HEK293 (cell line): ENCODE measurements at regions of chrX and their contacts with region 1.

Region 1: DNA sequence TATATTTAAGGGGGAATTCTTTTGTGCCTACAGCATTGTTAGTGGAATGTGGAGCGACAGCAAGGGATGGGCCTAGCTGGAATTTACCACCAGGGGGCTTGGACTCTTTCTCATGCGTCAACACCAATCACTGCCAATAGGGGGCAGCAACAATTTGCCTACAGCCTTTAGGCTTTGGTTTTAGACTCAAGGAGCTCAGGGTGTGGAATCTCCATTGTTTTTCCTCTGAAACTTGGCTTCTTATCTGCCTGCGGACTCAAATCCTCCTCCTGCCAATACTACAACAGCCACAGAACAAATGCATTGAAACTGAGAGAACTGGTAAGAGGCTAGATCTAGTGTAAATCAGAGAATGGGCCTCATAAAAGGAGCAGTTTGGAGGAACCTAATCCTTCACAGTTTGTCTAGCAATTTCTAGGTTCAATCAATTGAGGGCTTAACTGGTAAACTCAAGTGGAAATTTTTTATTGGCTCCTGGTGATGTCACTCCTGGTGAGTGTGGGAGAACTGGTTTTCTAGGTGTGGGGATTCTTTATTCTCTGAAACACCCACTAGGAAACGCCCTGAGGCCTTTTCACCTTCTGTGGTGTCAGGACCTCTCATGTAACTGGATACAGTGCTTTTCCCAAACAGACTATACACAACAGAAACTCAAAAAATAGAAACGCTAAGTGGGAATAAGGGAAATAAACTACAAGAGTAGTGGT is 27.9 kb upstream of the TMSB4X start:
- H3K4me3 ChIP-seq: no peak overlapping the region
- H3K27ac ChIP-seq: peak overlapping the region; percentile 90
- H3K4me1 ChIP-seq: peaks cover 17% of the 10 kb centered on the region
- CTCF ChIP-seq: peak; percentile 55; the same call in 1 of the 2 replicates

Region 2: DNA sequence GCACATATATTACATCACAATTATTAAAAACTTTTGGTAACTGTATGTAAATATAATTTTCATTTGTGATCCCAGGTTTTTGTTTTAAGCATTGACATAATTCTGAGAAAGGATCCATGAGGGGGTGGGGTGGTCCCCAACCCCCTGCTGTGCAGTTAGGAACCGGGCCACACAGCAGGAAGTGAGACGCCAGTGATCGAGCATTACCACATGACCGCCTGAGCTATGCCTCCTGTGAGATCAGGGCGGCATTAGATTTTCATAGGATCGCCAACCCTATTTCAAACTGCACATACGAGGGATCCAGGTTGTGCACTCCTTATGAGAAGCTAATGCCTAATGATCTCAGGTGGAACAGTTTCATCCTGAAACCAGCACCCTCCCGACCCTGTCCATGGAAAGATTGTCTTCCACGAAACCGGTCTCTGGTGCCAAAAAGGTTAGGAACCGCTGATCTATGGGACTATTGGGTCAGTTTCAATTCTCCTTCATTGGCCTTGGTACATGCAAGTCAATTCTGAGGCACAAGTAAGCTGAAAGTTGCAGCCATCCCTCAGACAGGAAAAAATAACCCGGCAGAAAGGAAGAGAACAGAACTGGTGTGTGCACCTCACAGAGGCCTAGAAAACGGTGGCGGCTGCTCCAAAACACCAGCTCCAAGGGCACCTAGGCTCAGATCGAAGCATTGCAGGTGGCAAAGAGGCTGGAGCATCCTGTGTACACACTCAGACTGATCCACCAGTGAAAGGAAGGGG is 20.9 kb after region 1 on chrX:
- CTCF ChIA-PET with region 1: interaction called, 27 read pairs
- POLR2A ChIA-PET with region 1: interaction called, 3 read pairs
- H3K4me3 ChIP-seq: no peak overlapping the region
- H3K27ac ChIP-seq: no peak overlapping the region
- H3K4me1 ChIP-seq: no peaks in the 10 kb centered on the region
- CTCF ChIP-seq: no peak

Region 3: GRCh38 chrX:13000301-13000811 is 53.4 kb after region 1 on chrX:
- CTCF ChIA-PET with region 1: interaction called, 13 read pairs
- POLR2A ChIA-PET with region 1: no interaction called
- H3K4me3 ChIP-seq: no peak overlapping the region
- H3K27ac ChIP-seq: no peak overlapping the region
- H3K4me1 ChIP-seq: peaks cover 7% of the 10 kb centered on the region; the same call in 1 of the 2 replicates
- CTCF ChIP-seq: no peak

Region 4: DNA sequence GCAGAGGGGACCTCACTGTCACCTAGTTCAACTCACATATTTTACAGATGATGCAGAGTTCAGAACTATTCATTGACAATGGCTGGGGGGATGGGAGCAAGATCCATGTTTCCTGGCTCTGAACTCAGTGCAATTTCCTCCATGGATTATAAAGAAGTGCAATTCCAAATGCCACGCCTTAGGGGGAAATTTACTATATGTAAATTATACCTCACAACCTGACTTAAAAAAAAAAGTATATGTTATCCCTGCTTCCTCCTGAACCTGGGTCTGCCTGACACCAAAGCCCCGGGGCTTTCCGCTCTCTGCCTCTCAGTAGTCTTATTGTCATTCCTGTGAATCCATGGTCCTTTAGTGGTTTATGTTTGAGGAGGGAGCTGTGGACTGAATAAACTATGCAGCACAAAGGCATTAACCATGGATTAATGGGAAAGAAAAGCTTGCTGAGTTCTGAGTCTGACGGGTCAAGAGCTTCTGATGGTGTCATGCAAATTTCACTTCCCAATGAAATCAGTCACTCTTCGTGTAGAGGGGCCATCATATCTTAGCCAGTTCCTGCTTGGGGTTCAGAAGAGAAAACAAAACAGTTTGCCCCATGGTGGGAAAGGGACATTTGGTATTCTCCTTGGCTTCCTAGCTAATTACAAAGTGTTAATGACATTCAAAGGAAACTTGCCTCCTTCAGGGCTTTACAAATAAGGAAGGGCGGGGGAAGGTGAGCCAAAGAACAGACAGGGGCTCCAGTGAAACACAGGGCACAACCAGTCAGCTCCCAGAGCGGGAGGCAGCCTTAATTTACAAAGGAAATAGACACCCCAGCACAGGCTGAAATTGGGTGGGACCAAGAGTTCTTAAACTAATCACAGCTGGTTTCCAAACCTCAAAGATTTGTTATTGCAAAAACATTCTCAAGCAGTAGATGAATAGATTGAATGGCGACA is 83.1 kb after region 1 on chrX:
- CTCF ChIA-PET with region 1: interaction called, 10 read pairs
- POLR2A ChIA-PET with region 1: interaction called, 7 read pairs
- H3K4me3 ChIP-seq: no peak overlapping the region
- H3K27ac ChIP-seq: peak overlapping the region; percentile 54
- H3K4me1 ChIP-seq: peaks cover 21% of the 10 kb centered on the region
- CTCF ChIP-seq: no peak

Region 5: GRCh38 chrX:13126775-13127174 is 179.8 kb after region 1 on chrX:
- CTCF ChIA-PET with region 1: interaction called, 11 read pairs
- POLR2A ChIA-PET with region 1: no interaction called
- H3K4me3 ChIP-seq: no peak overlapping the region
- H3K27ac ChIP-seq: peak overlapping the region; percentile 22; the same call in 1 of the 2 replicates
- H3K4me1 ChIP-seq: peaks cover 30% of the 10 kb centered on the region
- CTCF ChIP-seq: no peak

Region 6: GRCh38 chrX:13254076-13254785 is 307.2 kb after region 1 on chrX:
- CTCF ChIA-PET with region 1: interaction called, 17 read pairs
- POLR2A ChIA-PET with region 1: no interaction called
- H3K4me3 ChIP-seq: no peak overlapping the region
- H3K27ac ChIP-seq: no peak overlapping the region; the same call in 1 of the 2 replicates
- H3K4me1 ChIP-seq: no peaks in the 10 kb centered on the region
- CTCF ChIP-seq: no peak